Right ventricle myocardium inferior (tissue), 1 donor: ENCODE measurements at regions of chr10 and their contacts with region 1.

Region 1: GRCh38 chr10:97498076-97498840 is at the start of gene MMS19:
- DNase-seq: peak; percentile 100
- ATAC-seq: peak; percentile 93
- total RNA-seq, gene MMS19: 37.7 TPM

Region 2: GRCh38 chr10:97425964-97426775 is 72.1 kb before region 1 on chr10 and contains the start of gene PGAM1:
- intact Hi-C with region 1: loop called (anchors 5 kb)
- DNase-seq: peak; percentile 97
- ATAC-seq: peak; percentile 98
- total RNA-seq, gene PGAM1: 220 TPM

Region 3: GRCh38 chr10:97463363-97464132 is 34.7 kb before region 1 on chr10:
- intact Hi-C with region 1: loop called (anchors 5 kb)
- DNase-seq: no peak
- ATAC-seq: peak; percentile 37

Region 4: DNA sequence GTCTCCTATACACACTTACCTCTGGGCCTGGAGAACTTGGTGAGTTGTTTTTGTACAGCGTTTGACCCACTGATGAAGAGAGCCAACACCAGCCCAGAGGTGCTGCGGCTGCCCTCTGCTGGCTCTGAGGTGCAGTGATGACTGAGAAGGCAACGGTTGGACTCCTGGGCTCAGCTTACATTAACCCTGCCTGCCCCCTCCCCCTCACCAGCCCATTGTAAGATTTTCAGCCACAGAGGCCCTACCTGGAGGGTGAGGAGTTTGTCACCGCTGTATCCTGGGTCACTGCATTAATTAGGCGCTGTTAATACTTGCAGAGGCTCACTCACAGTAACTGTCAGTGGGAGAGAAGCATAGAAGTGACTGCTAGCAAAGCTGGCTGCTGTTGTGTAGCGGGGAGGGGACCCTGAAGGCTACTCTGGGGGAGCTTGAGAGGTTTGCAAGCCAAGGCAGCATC is 55.3 kb after region 1 on chr10:
- intact Hi-C with region 1: loop called (anchors 5 kb)
- DNase-seq: peak; percentile 84
- ATAC-seq: peak; percentile 86